ENCODE measurements at regions of chr2 and their contacts with region 1.

Region 1: DNA sequence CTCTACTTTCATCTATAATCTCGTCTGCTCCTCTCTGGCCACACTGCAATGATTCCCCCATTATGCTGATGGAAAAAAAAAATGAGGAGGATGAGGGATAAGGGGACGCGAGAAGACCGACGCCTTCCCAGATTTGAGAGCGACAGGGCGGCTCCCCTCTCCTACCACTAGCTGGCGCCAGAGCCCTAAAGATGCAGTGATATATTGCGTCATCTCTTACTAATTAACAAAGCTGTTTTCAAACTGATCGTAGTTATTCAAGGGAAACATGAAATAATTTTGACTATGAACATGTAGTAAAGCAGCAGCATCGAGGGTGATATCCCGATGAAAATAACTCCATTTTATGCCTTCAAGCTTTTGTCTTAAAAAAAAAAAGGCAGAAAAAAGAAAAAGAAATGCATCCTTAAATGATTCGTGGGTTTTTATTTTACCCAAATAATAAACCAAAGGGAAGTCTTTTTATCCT is 48.0 kb upstream of the HNRNPA3 start:
- DNase-seq: peak; percentile 66
- H3K4me3 ChIP-seq: peak overlapping the region; percentile 21 to 30 (median 29)
- H3K27ac ChIP-seq: peak overlapping the region; percentile 69
- H3K4me1 ChIP-seq: peaks cover 36% of the 10 kb centered on the region
- H3K27me3 ChIP-seq: no peaks in the 10 kb centered on the region
- CTCF ChIP-seq: peak; percentile 100

Region 2: GRCh38 chr2:177124371-177124770 is 40.2 kb before region 1 on chr2:
- CTCF ChIA-PET with region 1: no interaction called
- dilution Hi-C with region 1: no loop called
- in situ Hi-C with region 1: no loop called
- intact Hi-C with region 1: no loop called
- DNase-seq: peak; percentile 32
- H3K4me3 ChIP-seq: no peak overlapping the region
- H3K27ac ChIP-seq: no peak overlapping the region
- H3K4me1 ChIP-seq: no peaks in the 10 kb centered on the region
- H3K27me3 ChIP-seq: no peaks in the 10 kb centered on the region
- CTCF ChIP-seq: no peak

Region 3: GRCh38 chr2:177195194-177195593 is 30.6 kb after region 1 on chr2:
- CTCF ChIA-PET with region 1: interaction called, 7 read pairs
- dilution Hi-C with region 1: no loop called
- in situ Hi-C with region 1: no loop called
- intact Hi-C with region 1: loop called (anchors 1 kb)
- DNase-seq: no peak
- H3K4me3 ChIP-seq: no peak overlapping the region
- H3K27ac ChIP-seq: no peak overlapping the region
- H3K4me1 ChIP-seq: no peaks in the 10 kb centered on the region
- H3K27me3 ChIP-seq: no peaks in the 10 kb centered on the region
- CTCF ChIP-seq: peak in 1 of 2 donors; percentile 38

Region 4: GRCh38 chr2:177235855-177236437 is 71.3 kb after region 1 on chr2:
- CTCF ChIA-PET with region 1: no interaction called
- dilution Hi-C with region 1: no loop called
- in situ Hi-C with region 1: no loop called
- intact Hi-C with region 1: no loop called
- DNase-seq: no peak
- H3K4me3 ChIP-seq: no peak overlapping the region
- H3K27ac ChIP-seq: no peak overlapping the region
- H3K4me1 ChIP-seq: peaks cover 14% of the 10 kb centered on the region
- H3K27me3 ChIP-seq: no peaks in the 10 kb centered on the region
- CTCF ChIP-seq: no peak

Region 5: DNA sequence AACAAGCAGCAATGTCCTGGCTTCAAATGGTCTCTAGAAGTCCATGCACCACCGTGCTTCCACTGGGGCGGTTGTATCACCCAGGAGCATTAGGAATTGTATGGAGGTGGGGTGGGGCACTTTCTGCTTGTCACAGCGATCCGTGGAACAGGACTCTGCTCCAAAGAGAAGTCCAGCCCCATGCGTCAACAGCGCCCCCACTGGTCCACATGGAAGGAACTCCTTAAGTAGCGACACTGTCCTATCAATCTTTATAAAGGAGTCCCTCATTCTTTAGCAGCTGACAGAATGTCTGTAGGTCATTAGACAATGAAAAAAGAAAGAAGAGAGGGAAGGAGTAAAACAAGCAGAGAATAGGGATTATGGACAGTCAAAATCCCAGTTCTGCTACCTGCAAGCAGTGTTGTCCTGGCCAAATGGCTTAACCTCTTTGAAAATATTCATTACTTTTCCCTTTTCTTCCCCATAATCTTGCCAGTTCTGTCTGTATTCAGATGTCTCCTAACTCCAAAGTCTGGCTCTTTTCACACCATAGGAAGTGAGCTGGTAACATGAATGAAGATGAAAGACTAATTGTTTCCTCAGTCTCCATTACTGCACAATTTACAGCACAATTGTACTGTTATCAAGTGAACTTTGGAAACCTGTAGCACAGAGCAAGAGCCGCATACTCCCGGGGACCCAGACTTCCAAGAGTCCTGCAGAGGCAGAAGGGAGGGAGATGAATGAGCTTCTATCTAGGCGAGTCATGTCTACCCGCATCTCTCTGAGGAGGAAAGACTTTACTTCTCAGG is 90.0 kb after region 1 on chr2:
- CTCF ChIA-PET with region 1: no interaction called
- dilution Hi-C with region 1: loop called (anchors 10 kb)
- in situ Hi-C with region 1: no loop called
- intact Hi-C with region 1: no loop called
- DNase-seq: no peak
- H3K4me3 ChIP-seq: no peak overlapping the region
- H3K27ac ChIP-seq: no peak overlapping the region
- H3K4me1 ChIP-seq: peaks cover 58% of the 10 kb centered on the region
- H3K27me3 ChIP-seq: no peaks in the 10 kb centered on the region
- CTCF ChIP-seq: peak; percentile 36 to 44

Region 6: GRCh38 chr2:177325270-177325929 is 160.8 kb after region 1 on chr2:
- CTCF ChIA-PET with region 1: interaction called, 3 read pairs
- dilution Hi-C with region 1: loop called (anchors 5 kb)
- in situ Hi-C with region 1: loop called (anchors 5 kb)
- intact Hi-C with region 1: no loop called
- DNase-seq: peak; percentile 46
- H3K4me3 ChIP-seq: no peak overlapping the region
- H3K27ac ChIP-seq: peak overlapping the region; percentile 1
- H3K4me1 ChIP-seq: peaks cover 46% of the 10 kb centered on the region
- H3K27me3 ChIP-seq: no peaks in the 10 kb centered on the region
- CTCF ChIP-seq: no peak

Region 7: DNA sequence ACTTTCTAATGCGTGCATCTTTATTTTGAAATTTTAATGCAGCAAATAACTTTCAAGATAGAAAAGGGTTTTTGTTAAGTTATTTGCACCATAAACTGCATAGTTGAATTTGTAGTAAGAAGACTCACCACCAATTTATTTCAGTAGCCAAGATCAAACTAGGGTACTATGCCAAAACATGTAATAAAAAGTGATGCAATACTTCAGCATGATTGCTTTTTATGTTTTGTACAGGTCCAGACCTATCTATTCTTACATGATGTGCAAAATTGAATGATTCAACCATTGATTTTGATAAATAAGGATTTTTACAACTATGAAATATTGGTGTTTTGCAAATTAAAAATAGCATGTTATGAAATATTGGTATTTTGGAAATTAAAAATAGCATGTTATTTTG is 254.7 kb after region 1 on chr2:
- CTCF ChIA-PET with region 1: no interaction called
- dilution Hi-C with region 1: loop called (anchors 10 kb)
- in situ Hi-C with region 1: loop called (anchors 10 kb)
- intact Hi-C with region 1: loop called (anchors 1 kb)
- DNase-seq: peak; percentile 80
- H3K4me3 ChIP-seq: peak overlapping the region in 1 of 3 experiments; percentile 37
- H3K27ac ChIP-seq: no peak overlapping the region
- H3K4me1 ChIP-seq: peaks cover 12% of the 10 kb centered on the region
- H3K27me3 ChIP-seq: no peaks in the 10 kb centered on the region
- CTCF ChIP-seq: no peak

Region 8: GRCh38 chr2:177724398-177725287 is 560.0 kb after region 1 on chr2:
- CTCF ChIA-PET with region 1: no interaction called
- dilution Hi-C with region 1: no loop called
- in situ Hi-C with region 1: no loop called
- intact Hi-C with region 1: loop called (anchors 1 kb)
- DNase-seq: peak; percentile 15
- H3K4me3 ChIP-seq: no peak overlapping the region
- H3K27ac ChIP-seq: no peak overlapping the region
- H3K4me1 ChIP-seq: no peaks in the 10 kb centered on the region
- H3K27me3 ChIP-seq: peaks cover 2% of the 10 kb centered on the region
- CTCF ChIP-seq: peak; percentile 91 to 95

Measured in mammary epithelial cell (primary cell).